T-cell (primary cell): ENCODE measurements at regions of chr14 and their contacts with region 1.

Region 1: DNA sequence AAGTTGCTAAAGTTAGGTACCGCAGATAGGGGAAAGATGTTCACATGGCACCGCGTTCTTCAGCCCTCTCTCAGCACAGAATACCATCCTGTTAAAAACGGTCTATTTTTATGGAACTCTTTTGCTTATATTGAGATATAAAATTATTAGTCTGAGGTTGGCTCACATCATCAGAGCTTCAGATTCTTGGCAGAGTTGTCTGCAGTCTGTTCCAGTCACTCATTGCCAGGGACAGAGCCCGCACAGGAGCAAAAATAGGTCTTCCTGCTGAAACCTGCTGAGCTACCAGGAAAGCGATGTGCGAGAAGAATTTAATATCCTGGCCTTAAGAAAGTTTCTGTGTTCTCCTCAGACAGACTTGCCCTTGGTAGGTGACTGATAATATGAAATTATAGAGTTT is 249.8 kb downstream of the VRK1 start:
- DNase-seq: no peak
- ATAC-seq: no peak
- H3K4me3 ChIP-seq: no peak overlapping the region
- H3K4me3 Mint-ChIP-seq: no peak overlapping the region
- H3K27ac ChIP-seq: no peak overlapping the region
- H3K27ac Mint-ChIP-seq: no peak overlapping the region
- H3K4me1 ChIP-seq: no peaks in the 10 kb centered on the region
- H3K4me1 Mint-ChIP-seq: no peaks in the 10 kb centered on the region
- H3K27me3 ChIP-seq: no peaks in the 10 kb centered on the region
- H3K27me3 Mint-ChIP-seq: peaks cover 0 to 7% of the 10 kb centered on the region in 2 donors

Region 2: DNA sequence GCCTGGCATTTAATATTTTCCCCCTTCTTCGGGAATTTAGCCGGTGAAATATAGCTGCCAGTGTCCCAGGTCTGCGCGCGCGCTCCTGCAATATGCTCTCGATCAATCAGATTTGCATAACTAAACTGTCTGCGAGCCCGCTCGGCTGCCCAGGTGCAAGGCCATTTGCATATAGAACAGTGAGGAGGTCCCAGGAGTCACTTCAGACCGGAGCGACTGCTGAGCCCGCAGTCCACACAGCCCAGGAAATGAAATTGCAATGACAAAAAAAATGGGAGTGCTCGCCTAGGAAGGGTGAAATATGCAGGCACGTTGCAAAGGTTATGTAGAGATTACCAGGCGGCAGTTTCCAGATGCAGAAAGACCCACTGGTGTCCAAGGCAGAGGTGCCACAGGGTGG is 21.2 kb before region 1 on chr14:
- CTCF ChIA-PET with region 1: no interaction called
- POLR2A ChIA-PET with region 1: no interaction called
- DNase-seq: no peak
- ATAC-seq: no peak
- H3K4me3 ChIP-seq: no peak overlapping the region
- H3K4me3 Mint-ChIP-seq: no peak overlapping the region
- H3K27ac ChIP-seq: no peak overlapping the region
- H3K27ac Mint-ChIP-seq: no peak overlapping the region
- H3K4me1 ChIP-seq: peaks cover 2 to 7% of the 10 kb centered on the region in 2 experiments
- H3K4me1 Mint-ChIP-seq: peaks cover 8 to 15% (median 10%) of the 10 kb centered on the region in 3 donors
- H3K27me3 ChIP-seq: peaks cover 0 to 24% of the 10 kb centered on the region in 2 experiments
- H3K27me3 Mint-ChIP-seq: peaks cover 19 to 26% of the 10 kb centered on the region in 2 donors

Region 3: GRCh38 chr14:97126931-97127330 is 80.0 kb after region 1 on chr14:
- CTCF ChIA-PET with region 1: no interaction called
- POLR2A ChIA-PET with region 1: interaction called in 1 of 2 experiments, 13 read pairs
- DNase-seq: no peak
- ATAC-seq: no peak
- H3K4me3 ChIP-seq: no peak overlapping the region
- H3K4me3 Mint-ChIP-seq: no peak overlapping the region
- H3K27ac ChIP-seq: no peak overlapping the region
- H3K27ac Mint-ChIP-seq: no peak overlapping the region
- H3K4me1 ChIP-seq: no peaks in the 10 kb centered on the region
- H3K4me1 Mint-ChIP-seq: peaks cover 0 to 7% (median 5%) of the 10 kb centered on the region in 3 donors
- H3K27me3 ChIP-seq: no peaks in the 10 kb centered on the region
- H3K27me3 Mint-ChIP-seq: peaks cover 0 to 1% of the 10 kb centered on the region in 2 donors